ENCODE measurements at regions of chr1 and their contacts with region 1.

Region 1: DNA sequence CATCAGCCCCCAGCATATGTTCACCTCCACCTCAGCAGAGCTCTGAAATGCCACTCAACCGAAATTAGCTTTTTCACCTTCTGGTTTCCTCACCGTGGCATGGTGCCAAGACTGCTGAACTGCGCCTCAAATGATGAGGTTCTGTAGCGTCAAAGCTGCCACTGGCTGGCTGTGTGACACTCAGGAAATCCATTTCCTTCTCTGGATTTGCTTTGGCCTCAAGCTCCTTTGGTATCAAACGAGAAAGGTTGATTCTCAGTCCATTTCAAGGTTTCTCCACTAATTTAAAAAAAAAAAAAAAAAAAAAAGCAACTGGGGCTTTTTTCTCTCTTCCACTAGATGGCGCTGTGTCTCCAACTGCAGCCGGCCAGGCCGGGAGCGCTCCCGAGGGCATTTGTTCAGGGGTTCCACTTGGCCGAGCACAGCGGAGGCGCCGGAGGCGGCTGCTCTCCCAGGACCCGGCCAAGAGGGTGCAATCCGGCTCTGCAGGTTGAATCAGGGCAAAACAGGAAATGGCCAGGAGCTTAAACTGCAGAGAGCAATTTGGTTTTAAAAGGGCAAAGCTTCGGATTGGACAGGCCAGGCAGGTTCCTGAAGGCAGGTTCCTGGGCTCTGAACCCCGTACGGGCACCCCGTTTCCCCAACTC is 26.5 kb upstream of the PLA2G2C start:
- DNase-seq: peak; percentile 48 to 50
- ATAC-seq: peak; percentile 76 to 87
- H3K4me3 ChIP-seq: no peak overlapping the region
- H3K27ac ChIP-seq: peak overlapping the region; percentile 87 to 91
- H3K4me1 ChIP-seq: peaks cover 34% of the 10 kb centered on the region
- CTCF ChIP-seq: peak; percentile 86
- EP300 ChIP-seq: no peak
- POLR2A ChIP-seq: no peak
- RAD21 ChIP-seq: peak; percentile 69 to 82

Region 2: DNA sequence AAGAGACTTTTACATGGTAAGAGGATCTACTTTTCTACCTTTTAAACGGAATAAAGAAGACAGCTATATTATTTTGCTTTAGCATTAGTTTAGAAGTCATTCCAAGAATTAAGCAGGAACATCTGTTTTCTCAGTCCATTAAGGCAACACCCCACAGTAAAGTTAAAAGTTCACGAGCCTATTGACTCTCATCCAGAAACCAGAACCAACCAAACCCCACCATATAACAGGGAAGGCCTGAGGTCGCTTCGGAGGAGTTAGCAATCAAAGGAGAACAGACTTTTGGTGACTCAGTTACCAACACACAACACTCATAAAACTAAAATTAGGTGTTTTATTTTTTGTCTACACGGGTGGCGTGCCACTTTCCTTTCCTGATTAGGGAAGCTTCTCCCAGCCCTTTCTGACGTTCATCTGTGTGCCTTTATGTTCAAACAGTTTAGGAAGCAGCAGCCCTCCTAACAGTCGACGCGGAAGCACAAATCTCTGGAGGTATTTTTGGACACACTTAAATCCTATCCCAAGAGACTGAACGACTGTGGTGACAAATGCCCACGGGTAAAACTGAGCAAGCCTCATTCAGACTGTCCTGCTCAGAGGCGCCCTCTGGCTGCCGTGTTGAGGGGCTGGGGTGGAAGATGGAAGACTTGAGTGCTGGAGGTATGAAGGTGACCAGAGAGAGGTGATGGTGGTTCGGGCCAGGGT is 17.9 kb before region 1 on chr1:
- CTCF ChIA-PET with region 1: interaction called, 24 read pairs
- POLR2A ChIA-PET with region 1: no interaction called
- DNase-seq: peak; percentile 42 to 53
- ATAC-seq: peak; percentile 72 to 86; a peak in 4 of 6 replicates
- H3K4me3 ChIP-seq: no peak overlapping the region
- H3K27ac ChIP-seq: no peak overlapping the region
- H3K4me1 ChIP-seq: peaks cover 8% of the 10 kb centered on the region; the same call in 1 of the 3 replicates
- CTCF ChIP-seq: peak; percentile 54; the same call in 2 of the 3 replicates
- EP300 ChIP-seq: no peak
- POLR2A ChIP-seq: no peak
- RAD21 ChIP-seq: peak; percentile 40 to 45; a peak in 3 of 5 replicates

Region 3: GRCh38 chr1:20233394-20233793 is 20.6 kb after region 1 on chr1:
- CTCF ChIA-PET with region 1: interaction called, 32 read pairs
- POLR2A ChIA-PET with region 1: no interaction called
- DNase-seq: peak in 1 of 2 experiments; percentile 31
- ATAC-seq: peak; percentile 54 to 78; a peak in 4 of 6 replicates
- H3K4me3 ChIP-seq: no peak overlapping the region
- H3K27ac ChIP-seq: no peak overlapping the region
- H3K4me1 ChIP-seq: no peaks in the 10 kb centered on the region
- CTCF ChIP-seq: peak; percentile 49
- EP300 ChIP-seq: no peak
- POLR2A ChIP-seq: no peak
- RAD21 ChIP-seq: peak; percentile 23 to 29; a peak in 4 of 5 replicates

Region 4: GRCh38 chr1:20329793-20330542 is 117.2 kb after region 1 on chr1:
- CTCF ChIA-PET with region 1: no interaction called
- POLR2A ChIA-PET with region 1: no interaction called
- DNase-seq: no peak
- ATAC-seq: no peak
- H3K4me3 ChIP-seq: no peak overlapping the region
- H3K27ac ChIP-seq: no peak overlapping the region
- H3K4me1 ChIP-seq: no peaks in the 10 kb centered on the region
- CTCF ChIP-seq: 0 out of 3 replicates have a peak, but pooled peaks have one; percentile 10
- EP300 ChIP-seq: no peak
- POLR2A ChIP-seq: no peak
- RAD21 ChIP-seq: no peak

Region 5: DNA sequence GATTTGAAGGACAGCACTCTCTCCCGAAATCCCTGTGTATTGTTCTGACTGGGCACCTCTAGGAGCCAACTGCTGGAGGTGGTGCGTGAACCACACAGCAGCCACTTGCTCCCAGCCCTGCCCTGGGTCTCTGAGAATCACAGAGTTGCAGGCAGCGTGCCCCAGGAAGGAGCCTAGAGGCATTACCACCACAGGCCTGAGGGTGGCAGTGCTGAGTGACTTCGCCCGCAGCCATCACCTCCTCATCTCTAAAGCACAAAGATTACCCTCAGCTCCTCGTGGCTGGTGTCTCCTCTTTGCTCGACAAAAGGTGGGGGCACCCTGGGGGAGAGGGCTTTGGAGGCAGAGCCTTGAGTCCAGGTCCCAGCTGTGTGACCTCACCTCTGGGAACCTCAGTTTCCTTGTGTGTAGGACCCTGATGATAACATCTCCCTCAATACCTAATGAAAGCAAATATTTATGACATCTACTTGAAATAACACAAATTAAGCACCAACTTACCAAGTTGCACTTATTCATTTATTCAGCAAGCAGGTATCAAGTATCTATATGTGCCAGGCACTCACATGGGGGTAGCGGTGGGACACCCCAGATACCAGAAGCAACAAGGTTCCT is 164.2 kb after region 1 on chr1:
- CTCF ChIA-PET with region 1: interaction called, 11 read pairs
- POLR2A ChIA-PET with region 1: no interaction called
- DNase-seq: peak; percentile 34 to 59
- ATAC-seq: peak; percentile 65 to 92; a peak in 5 of 6 replicates
- H3K4me3 ChIP-seq: no peak overlapping the region
- H3K27ac ChIP-seq: peak overlapping the region in 1 of 2 experiments; percentile 43; a peak in 2 of 6 replicates
- H3K4me1 ChIP-seq: peaks cover 33% of the 10 kb centered on the region
- CTCF ChIP-seq: peak; percentile 48
- EP300 ChIP-seq: no peak
- POLR2A ChIP-seq: no peak
- RAD21 ChIP-seq: peak; percentile 42 to 61; a peak in 4 of 5 replicates

Measured in A549 (cell line).